GM10248 (cell line): ENCODE measurements at regions of chr7 and their contacts with region 1.

Region 1: DNA sequence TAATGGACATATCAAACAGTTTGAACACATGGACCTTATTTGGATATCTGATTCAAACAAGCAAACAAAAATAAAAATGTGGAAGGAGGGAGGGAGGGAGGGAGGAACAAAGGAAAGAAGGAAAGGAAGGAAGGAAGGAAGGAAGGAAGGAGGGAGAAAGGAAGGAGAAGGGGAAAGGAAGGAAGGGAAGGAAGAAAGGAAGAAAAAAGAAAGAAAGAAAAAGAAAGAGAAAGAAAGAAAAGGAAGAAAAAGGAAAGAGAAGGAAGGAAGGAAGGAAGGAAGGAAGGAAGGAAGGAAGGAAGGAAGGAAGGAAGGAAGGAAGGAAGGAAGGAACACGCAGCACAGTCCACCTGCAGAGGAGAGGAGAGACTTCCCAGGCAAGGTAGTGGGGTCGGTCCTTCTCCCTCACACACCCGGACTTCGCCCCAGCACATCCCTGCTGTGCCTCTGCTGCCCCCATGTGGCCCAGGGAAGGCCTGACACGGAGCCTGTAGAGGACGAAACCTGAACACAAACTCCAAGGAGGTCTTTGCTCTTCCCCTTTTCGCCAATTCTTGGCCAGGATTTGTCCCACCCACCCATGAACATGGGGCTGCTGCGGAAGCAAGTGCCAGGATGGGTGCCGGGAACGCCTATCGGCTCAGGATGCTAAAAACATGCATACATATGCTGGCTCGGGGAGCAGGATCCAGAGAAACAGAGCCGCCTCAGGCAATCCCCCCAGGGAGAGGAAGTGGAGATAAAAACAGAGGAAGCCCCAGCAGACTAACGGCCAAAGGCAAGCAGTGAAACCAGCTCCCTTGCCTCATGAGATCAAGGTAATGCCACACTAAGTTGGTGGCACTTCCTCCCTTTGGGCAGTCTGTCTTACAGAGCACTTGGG is 52.3 kb upstream of the DGKI start:
- DNase-seq: peak; percentile 73
- CTCF ChIP-seq: peak; percentile 97

Region 2: GRCh38 chr7:137656227-137656849 is 242.7 kb before region 1 on chr7:
- CTCF ChIA-PET with region 1: interaction called, 110 read pairs
- POLR2A ChIA-PET with region 1: no interaction called
- DNase-seq: peak; percentile 70
- CTCF ChIP-seq: peak; percentile 83

Region 3: GRCh38 chr7:137820677-137821420 is 78.2 kb before region 1 on chr7:
- CTCF ChIA-PET with region 1: interaction called, 16 read pairs
- POLR2A ChIA-PET with region 1: interaction called, 3 read pairs
- DNase-seq: peak; percentile 44
- CTCF ChIP-seq: no peak

Region 4: DNA sequence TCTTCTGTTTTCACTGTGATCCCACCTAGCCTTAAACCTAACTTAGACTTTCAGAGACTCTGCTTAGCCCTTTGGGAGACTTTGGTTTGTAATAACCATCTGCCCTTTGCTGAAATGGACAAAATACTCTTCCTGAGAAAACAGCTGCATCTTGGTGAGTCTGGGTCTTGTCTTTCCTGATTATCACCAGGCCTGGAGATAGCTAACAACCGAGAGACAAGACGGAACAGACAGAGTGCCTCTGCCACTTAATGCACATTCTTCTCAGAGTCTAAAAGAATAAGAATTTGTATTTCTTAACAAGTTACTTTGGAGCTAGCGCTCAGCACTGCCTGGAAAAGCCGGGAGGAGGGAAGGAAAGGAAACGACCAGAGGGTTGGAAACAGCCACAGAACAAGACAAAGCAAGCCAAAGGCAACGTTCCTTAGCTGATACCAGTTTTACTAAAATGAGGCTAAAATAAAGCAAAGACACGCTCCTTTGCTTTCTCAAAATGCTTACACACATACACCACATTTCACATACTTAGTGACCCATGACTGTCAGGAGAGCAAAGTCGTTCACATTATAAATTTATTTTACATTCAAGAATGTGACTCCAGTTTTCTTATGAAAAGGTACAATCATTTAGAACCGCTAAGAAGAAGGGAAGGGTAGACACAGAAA is 18.0 kb after region 1 on chr7:
- CTCF ChIA-PET with region 1: interaction called, 34 read pairs
- POLR2A ChIA-PET with region 1: no interaction called
- DNase-seq: no peak
- CTCF ChIP-seq: no peak

Region 5: GRCh38 chr7:138002096-138002827 is 103.2 kb after region 1 on chr7:
- CTCF ChIA-PET with region 1: interaction called, 494 read pairs
- POLR2A ChIA-PET with region 1: no interaction called
- DNase-seq: peak; percentile 95
- CTCF ChIP-seq: peak; percentile 72

Region 6: DNA sequence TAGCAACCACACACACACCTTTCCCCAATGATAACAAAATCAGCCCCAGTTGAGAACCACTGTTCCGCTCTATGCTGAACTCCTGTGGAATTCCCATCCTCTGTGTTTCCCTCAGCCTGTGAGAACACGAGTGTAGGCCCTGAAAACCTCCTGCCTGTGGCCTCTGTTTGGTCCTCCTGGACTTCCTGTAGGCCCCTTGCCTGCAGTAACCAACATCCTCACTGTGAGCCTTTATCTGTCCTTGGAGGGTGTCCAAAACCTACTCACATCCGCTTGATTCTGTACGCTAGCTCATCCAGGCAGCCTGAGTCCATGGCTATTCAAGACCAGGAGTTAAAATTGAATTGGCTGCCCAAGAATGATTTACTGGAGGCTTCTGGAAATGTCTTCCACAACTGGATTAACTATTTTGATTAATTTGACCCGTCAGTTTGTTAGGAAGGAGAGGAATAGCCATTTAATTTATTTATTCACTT is 327.0 kb after region 1 on chr7:
- CTCF ChIA-PET with region 1: no interaction called
- POLR2A ChIA-PET with region 1: no interaction called
- DNase-seq: no peak
- CTCF ChIP-seq: no peak

Region 7: GRCh38 chr7:138738551-138739335 is 839.7 kb after region 1 on chr7:
- CTCF ChIA-PET with region 1: interaction called, 11 read pairs
- POLR2A ChIA-PET with region 1: no interaction called
- DNase-seq: peak; percentile 76
- CTCF ChIP-seq: peak; percentile 91